Thyroid gland (tissue), 4 donors: ENCODE measurements at regions of chr11 and their contacts with region 1.

Region 1: GRCh38 chr11:112280268-112281126 is 19.8 kb upstream of the PLET1 start:
- DNase-seq: peak; percentile 60 to 66
- H3K4me3 ChIP-seq: peak overlapping the region in 1 of 3 donors; percentile 30
- H3K27ac ChIP-seq: peak overlapping the region in 2 of 3 donors; percentile 30 to 40
- H3K4me1 ChIP-seq: peaks cover 0 to 4% of the 10 kb centered on the region in 2 donors
- H3K27me3 ChIP-seq: no peaks in the 10 kb centered on the region
- CTCF ChIP-seq: peak; percentile 34 to 82 (median 60)
- POLR2A ChIP-seq: no peak

Region 2: GRCh38 chr11:112113539-112114457 is 166.7 kb before region 1 on chr11:
- intact Hi-C with region 1: loop called (anchors 5 kb)
- DNase-seq: no peak
- H3K4me3 ChIP-seq: no peak overlapping the region
- H3K27ac ChIP-seq: no peak overlapping the region
- H3K4me1 ChIP-seq: no peaks in the 10 kb centered on the region
- H3K27me3 ChIP-seq: no peaks in the 10 kb centered on the region
- CTCF ChIP-seq: peak in 5 of 6 experiments; percentile 41 to 69 (median 53)
- POLR2A ChIP-seq: no peak